GM12878 (cell line): ENCODE measurements at regions of chr10 and their contacts with region 1.

Region 1: DNA sequence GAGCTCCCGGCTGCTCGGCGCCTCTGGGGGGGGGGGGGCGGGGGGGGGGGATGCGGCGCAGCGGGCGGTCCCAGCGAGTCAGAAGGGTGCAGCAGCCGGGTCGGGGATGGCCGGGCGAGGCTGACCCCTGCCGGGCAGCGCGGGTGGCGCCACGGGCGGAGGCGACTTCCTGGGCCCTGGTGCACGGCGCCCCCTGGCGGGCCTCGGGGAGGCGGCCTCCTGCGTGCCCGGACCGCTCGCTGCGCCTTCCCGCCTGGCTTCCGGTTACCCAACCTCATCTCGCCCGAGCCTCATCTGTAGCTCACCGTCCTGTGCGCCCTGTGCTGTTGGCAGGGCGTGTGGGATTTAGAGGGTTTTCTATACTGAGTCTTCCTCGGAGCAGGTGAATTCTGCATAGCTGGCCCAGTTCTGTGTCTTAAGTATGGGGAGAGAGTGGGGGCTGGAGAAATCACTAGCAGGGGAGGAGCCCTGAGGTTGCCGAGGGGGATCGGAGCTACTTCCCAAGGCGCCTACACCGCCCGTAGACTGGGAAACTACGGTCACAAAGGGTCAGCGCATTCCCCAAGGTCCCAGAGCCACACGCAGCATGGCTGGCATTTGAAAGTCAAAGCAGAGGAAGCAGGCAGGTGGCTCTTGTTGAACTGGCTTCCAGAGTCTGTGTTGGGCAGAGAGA is 28.3 kb upstream of the WDFY4 start:
- DNase-seq: peak; percentile 90
- ATAC-seq: peak; percentile 91
- H3K4me3 ChIP-seq: peak overlapping the region; percentile 68
- H3K27ac ChIP-seq: no peak overlapping the region
- H3K4me1 ChIP-seq: peaks cover 11% of the 10 kb centered on the region
- H3K27me3 ChIP-seq: no peaks in the 10 kb centered on the region
- CTCF ChIP-seq: peak; percentile 86 to 100 (median 96); a peak in 5 of 6 replicates
- EP300 ChIP-seq: no peak
- POLR2A ChIP-seq: 0 out of 2 replicates have a peak, but pooled peaks have one; percentile 43
- RAD21 ChIP-seq: peak; percentile 93

Region 2: DNA sequence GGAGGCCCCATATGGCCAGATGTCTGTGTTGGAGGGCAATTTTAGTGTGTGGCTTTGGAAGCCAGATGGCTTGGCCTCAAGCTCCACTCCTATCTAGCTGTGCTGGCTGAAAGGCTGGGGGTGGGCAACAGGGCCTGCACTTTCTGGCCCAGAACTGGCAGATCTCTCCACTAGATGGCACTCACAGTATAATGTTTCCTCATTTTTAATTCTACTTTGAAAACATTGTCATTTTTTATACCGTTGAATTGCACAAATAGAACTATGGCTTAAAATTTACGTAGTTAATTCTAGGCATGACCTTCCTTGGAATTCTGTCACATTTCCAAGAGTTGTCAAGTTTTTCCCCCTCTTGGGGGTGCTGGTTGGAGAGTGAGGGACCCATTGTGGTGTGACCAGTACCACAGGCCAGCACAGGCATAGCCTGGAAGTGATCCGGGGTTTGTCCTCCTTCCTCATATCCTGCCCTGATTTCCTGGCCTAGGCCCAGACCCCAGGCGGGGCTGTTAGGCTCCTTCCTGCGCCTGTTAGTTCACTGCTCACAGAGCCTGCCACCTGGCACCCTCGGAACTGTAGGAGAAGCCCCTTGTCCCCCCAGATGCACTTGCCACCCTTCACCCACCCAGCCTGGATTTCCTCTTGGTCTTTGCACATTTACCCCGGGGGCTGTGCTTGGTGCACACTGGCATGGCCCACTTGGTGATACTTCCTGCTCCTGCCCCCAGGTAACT is 104.4 kb before region 1 on chr10:
- CTCF ChIA-PET with region 1: interaction called, 436 read pairs
- POLR2A ChIA-PET with region 1: interaction called, 4 read pairs
- RAD21 ChIA-PET with region 1: interaction called, 333 read pairs
- SMC1A ChIA-PET with region 1: interaction called, 173 read pairs
- in situ Hi-C with region 1: loop called (anchors 5 kb)
- intact Hi-C with region 1: loop called (anchors 1 kb)
- DNase-seq: no peak
- ATAC-seq: peak; percentile 93
- H3K4me3 ChIP-seq: no peak overlapping the region
- H3K27ac ChIP-seq: no peak overlapping the region
- H3K4me1 ChIP-seq: no peaks in the 10 kb centered on the region
- H3K27me3 ChIP-seq: no peaks in the 10 kb centered on the region; a peak in 1 of 4 replicates
- CTCF ChIP-seq: peak; percentile 60 to 84 (median 78)
- EP300 ChIP-seq: no peak
- POLR2A ChIP-seq: no peak
- RAD21 ChIP-seq: peak; percentile 80

Region 3: GRCh38 chr10:48608279-48608681 is 48.1 kb before region 1 on chr10:
- CTCF ChIA-PET with region 1: interaction called, 664 read pairs
- POLR2A ChIA-PET with region 1: interaction called, 7 read pairs
- RAD21 ChIA-PET with region 1: interaction called, 383 read pairs
- SMC1A ChIA-PET with region 1: interaction called, 298 read pairs
- in situ Hi-C with region 1: no loop called
- intact Hi-C with region 1: loop called (anchors 1 kb)
- DNase-seq: peak; percentile 48
- ATAC-seq: peak; percentile 83
- H3K4me3 ChIP-seq: no peak overlapping the region
- H3K27ac ChIP-seq: no peak overlapping the region
- H3K4me1 ChIP-seq: peaks cover 14% of the 10 kb centered on the region
- H3K27me3 ChIP-seq: no peaks in the 10 kb centered on the region; a peak in 1 of 4 replicates
- CTCF ChIP-seq: peak; percentile 88 to 94 (median 89)
- EP300 ChIP-seq: no peak
- POLR2A ChIP-seq: no peak
- RAD21 ChIP-seq: peak; percentile 69

Region 4: DNA sequence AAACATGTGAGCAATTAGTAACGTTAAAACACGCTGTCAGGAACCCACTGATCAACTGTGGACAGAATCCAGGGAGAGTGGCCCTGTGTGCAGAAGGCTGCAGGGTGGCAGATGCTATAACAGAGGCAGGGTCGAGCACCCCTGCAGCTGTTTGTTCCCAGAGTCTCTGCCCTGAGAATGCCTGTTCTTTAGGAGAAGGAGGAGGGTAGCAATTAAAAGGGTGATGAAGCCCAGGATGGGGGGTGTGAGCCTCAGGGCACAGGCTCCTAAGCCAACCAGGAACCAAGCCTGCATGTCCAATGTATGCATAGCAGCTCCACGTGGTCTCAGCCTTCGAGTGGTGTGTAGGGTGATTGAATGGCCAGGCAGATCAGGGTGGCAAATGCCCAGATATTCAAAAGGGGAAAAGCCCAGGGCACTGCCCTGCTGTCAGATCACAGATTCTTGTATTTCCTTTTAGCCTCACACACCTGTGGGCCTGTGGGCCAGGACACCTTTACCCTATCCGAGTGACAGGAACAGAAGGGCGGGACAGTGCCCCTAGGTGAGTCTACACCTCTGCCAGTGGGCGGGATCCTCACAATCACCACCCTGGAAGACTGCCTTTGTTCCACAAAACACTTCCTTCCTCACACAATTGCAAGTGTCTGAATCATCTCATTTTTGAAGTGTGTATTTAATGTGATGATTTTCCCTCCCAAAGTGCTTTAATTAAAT is 35.6 kb after region 1 on chr10:
- CTCF ChIA-PET with region 1: interaction called, 221 read pairs
- POLR2A ChIA-PET with region 1: interaction called, 3 read pairs
- RAD21 ChIA-PET with region 1: interaction called, 12 read pairs
- SMC1A ChIA-PET with region 1: interaction called, 10 read pairs
- in situ Hi-C with region 1: loop called (anchors 5 kb)
- intact Hi-C with region 1: no loop called
- DNase-seq: no peak
- ATAC-seq: peak; percentile 7; the same call in 2 of the 3 replicates
- H3K4me3 ChIP-seq: no peak overlapping the region
- H3K27ac ChIP-seq: no peak overlapping the region
- H3K4me1 ChIP-seq: peaks cover 15% of the 10 kb centered on the region
- H3K27me3 ChIP-seq: no peaks in the 10 kb centered on the region
- CTCF ChIP-seq: no peak
- EP300 ChIP-seq: no peak
- POLR2A ChIP-seq: no peak
- RAD21 ChIP-seq: no peak

Region 5: GRCh38 chr10:48765039-48765438 is 108.7 kb after region 1 on chr10:
- CTCF ChIA-PET with region 1: interaction called, 24 read pairs
- POLR2A ChIA-PET with region 1: no interaction called
- RAD21 ChIA-PET with region 1: interaction called, 17 read pairs
- SMC1A ChIA-PET with region 1: interaction called, 18 read pairs
- in situ Hi-C with region 1: no loop called
- intact Hi-C with region 1: no loop called
- DNase-seq: no peak
- ATAC-seq: peak; percentile 76
- H3K4me3 ChIP-seq: no peak overlapping the region
- H3K27ac ChIP-seq: peak overlapping the region; percentile 54
- H3K4me1 ChIP-seq: peaks cover 13% of the 10 kb centered on the region
- H3K27me3 ChIP-seq: no peaks in the 10 kb centered on the region
- CTCF ChIP-seq: peak; percentile 33 to 45 (median 37); a peak in 4 of 6 replicates
- EP300 ChIP-seq: no peak
- POLR2A ChIP-seq: no peak
- RAD21 ChIP-seq: peak; percentile 23; the same call in 1 of the 2 replicates

Region 6: GRCh38 chr10:49164559-49165188 is 508.3 kb after region 1 on chr10:
- CTCF ChIA-PET with region 1: interaction called, 6 read pairs
- POLR2A ChIA-PET with region 1: no interaction called
- RAD21 ChIA-PET with region 1: interaction called, 7 read pairs
- SMC1A ChIA-PET with region 1: interaction called, 3 read pairs
- in situ Hi-C with region 1: no loop called
- intact Hi-C with region 1: loop called (anchors 1 kb)
- DNase-seq: no peak
- ATAC-seq: peak; percentile 87
- H3K4me3 ChIP-seq: no peak overlapping the region
- H3K27ac ChIP-seq: no peak overlapping the region
- H3K4me1 ChIP-seq: no peaks in the 10 kb centered on the region
- H3K27me3 ChIP-seq: no peaks in the 10 kb centered on the region
- CTCF ChIP-seq: peak; percentile 51 to 75 (median 72)
- EP300 ChIP-seq: no peak
- POLR2A ChIP-seq: no peak
- RAD21 ChIP-seq: peak; percentile 73

Region 7: DNA sequence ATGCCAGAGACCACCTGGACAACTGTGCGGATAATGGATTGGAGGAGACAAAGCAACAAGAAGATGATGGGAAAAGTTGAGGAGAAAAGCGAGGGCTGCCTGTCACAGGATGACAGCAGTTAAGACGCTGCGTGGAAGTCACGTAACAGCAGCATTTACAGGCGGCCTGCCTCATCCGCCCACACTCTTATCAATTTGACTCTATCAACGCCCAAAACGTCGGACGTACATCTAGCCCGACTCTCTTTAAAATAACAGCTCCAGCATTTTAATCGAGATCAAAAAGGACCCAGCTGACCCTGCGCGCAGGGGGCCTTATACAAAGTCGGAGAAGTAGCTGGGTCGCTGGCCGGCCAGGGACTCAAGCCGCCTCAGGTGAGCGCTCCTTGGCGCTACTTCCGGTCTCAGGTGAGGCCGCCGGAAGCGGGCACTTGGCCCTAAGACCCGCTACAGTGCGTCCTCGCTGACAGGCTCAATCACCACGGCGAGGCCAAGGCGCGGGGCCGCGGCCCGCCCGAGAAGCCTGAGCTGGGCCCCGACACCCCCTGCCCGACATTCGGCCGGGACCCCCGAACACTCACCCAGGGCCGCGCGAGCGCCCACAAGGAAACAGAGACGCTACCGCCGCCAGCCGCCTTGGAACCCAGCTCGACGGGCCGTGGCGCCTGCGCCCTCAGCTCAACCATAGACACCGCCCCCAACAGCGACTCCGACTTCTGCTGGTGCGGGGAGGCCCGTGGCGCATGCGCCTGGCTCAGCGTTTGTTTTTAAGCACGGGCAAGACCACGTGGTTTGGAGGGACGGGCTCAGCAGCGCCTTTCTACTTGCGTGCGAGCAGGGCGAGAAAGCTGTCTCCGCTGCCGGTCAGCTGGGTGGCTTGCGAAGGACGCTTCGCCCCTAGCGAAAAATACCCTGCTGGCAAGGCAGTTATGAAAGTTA is 882.3 kb after region 1 on chr10 and contains the start of gene ERCC6:
- CTCF ChIA-PET with region 1: interaction called, 6 read pairs
- POLR2A ChIA-PET with region 1: no interaction called
- RAD21 ChIA-PET with region 1: interaction called, 5 read pairs
- SMC1A ChIA-PET with region 1: no interaction called
- in situ Hi-C with region 1: loop called (anchors 10 kb)
- intact Hi-C with region 1: no loop called
- DNase-seq: peak; percentile 91
- ATAC-seq: peak; percentile 90
- H3K4me3 ChIP-seq: peak within 1 kb of the TSS; percentile 64
- H3K27ac ChIP-seq: peak within 1 kb of the TSS; percentile 82
- H3K4me1 ChIP-seq: peaks cover 32% of the 10 kb centered on the region
- H3K27me3 ChIP-seq: no peaks in the 10 kb centered on the region
- CTCF ChIP-seq: 0 out of 6 replicates have a peak, but pooled peaks of 1 of the 3 experiments have one; percentile 1
- EP300 ChIP-seq: peak; percentile 51 to 68; a peak in 2 of 4 replicates
- POLR2A ChIP-seq: peak; percentile 91
- RAD21 ChIP-seq: no peak
- polyA plus RNA-seq, gene ERCC6: 4.3 to 6.6 TPM